ENCODE measurements at regions of chrX and their contacts with region 1.

Region 1: GRCh38 chrX:46642145-46642544 is 68.6 kb downstream of the CHST7 start:
- DNase-seq: peak in 1 of 2 experiments; percentile 18
- H3K4me3 ChIP-seq: no peak overlapping the region
- H3K4me3 Mint-ChIP-seq: no peak overlapping the region
- H3K27ac Mint-ChIP-seq: no peak overlapping the region
- H3K4me1 ChIP-seq: no peaks in the 10 kb centered on the region
- H3K4me1 Mint-ChIP-seq: no peaks in the 10 kb centered on the region
- H3K27me3 ChIP-seq: no peaks in the 10 kb centered on the region
- H3K27me3 Mint-ChIP-seq: no peaks in the 10 kb centered on the region
- CTCF ChIP-seq: peak; percentile 27 to 36

Region 2: DNA sequence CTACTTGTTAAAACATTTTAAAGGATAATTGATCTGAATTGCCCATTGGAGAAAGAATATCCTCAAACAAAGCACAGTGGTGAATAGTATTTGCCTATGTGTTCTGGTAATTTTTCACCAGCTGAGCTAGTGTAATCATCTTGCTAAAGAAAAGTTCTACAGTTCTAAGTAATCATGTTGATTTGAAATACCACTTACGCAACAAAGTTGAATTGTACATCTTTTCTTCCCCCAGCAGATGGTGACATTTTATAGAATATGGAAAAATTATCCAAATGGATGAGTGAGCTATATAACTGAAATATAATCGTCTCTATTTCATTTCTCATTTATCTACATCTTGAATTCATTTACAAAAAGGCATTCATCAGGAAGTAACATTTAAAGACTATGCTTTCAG is 87.2 kb before region 1 on chrX:
- CTCF ChIA-PET with region 1: interaction called, 9 read pairs
- POLR2A ChIA-PET with region 1: no interaction called
- intact Hi-C with region 1: loop called (anchors 1 kb)
- DNase-seq: no peak
- H3K4me3 ChIP-seq: no peak overlapping the region
- H3K4me3 Mint-ChIP-seq: no peak overlapping the region
- H3K27ac Mint-ChIP-seq: no peak overlapping the region
- H3K4me1 ChIP-seq: no peaks in the 10 kb centered on the region
- H3K4me1 Mint-ChIP-seq: no peaks in the 10 kb centered on the region
- H3K27me3 ChIP-seq: no peaks in the 10 kb centered on the region
- H3K27me3 Mint-ChIP-seq: no peaks in the 10 kb centered on the region
- CTCF ChIP-seq: no peak

Region 3: DNA sequence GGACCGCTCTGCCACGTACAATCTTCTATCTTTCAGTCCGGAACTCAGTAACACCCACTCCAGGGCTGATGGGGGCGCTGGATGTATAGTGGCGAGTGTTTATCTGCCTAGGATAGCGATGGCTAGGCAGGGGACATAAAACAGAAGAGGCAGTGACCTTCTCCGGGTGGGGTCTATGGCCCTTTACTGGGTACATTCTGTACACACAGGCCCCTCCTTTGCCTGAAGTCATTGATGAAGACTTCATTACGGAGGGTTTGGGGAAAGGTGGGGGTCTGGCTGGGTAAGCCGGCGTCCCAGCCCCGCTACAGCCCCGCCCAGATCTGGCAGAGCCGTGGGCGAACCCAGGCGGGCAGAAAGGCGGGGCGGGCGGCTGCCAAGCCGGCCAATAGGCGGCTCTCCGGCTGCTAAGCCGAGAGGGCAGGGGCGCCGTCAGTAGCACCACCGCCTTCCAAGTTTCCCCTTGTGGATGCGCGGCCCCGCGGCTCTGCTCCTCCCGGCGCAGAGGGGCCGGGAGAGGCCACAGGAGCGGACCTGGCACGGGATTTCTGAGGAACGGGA is 68.7 kb before region 1 on chrX and contains the start of gene CHST7:
- CTCF ChIA-PET with region 1: no interaction called
- POLR2A ChIA-PET with region 1: no interaction called
- intact Hi-C with region 1: loop called (anchors 1 kb)
- DNase-seq: peak; percentile 60 to 72
- H3K4me3 ChIP-seq: peak within 1 kb of the TSS; percentile 71
- H3K4me3 Mint-ChIP-seq: peak within 1 kb of the TSS; percentile 79
- H3K27ac Mint-ChIP-seq: peak within 1 kb of the TSS; percentile 57
- H3K4me1 ChIP-seq: no peaks in the 10 kb centered on the region; the same call in 1 of the 2 replicates
- H3K4me1 Mint-ChIP-seq: peaks cover 7% of the 10 kb centered on the region
- H3K27me3 ChIP-seq: no peaks in the 10 kb centered on the region
- H3K27me3 Mint-ChIP-seq: no peaks in the 10 kb centered on the region
- CTCF ChIP-seq: peak in 1 of 2 experiments; percentile 30
- total RNA-seq, gene CHST7: 1.5 and 2.4 TPM in 2 replicates

Measured in Caco-2 (cell line).